ENCODE measurements at regions of chr5 and their contacts with region 1.

Region 1: DNA sequence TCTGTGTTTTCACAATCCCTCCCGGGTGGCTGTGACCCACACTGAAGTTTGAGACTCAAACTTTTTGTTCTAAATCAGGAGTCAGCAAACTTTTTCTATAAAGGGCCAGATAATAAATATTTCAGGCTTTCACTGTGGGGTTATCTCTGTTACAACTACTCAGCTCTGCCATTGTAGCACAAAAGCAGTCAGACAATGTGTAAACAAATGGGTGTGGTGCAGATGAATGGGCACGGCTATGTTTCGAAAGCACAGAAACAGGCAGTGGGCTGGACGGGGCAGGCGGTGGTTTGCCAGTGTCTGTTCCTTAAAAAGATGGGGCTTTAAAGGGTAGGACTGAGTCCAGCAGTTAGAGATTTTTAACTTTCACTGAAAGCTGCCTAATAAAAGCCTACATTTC is 49.0 kb downstream of the PFDN1 start:
- DNase-seq: no peak
- H3K4me3 ChIP-seq: no peak overlapping the region
- CTCF ChIP-seq: no peak
- POLR2A ChIP-seq: no peak

Region 2: GRCh38 chr5:140141241-140141640 is 112.7 kb before region 1 on chr5:
- intact Hi-C with region 1: no loop called
- DNase-seq: peak; percentile 74 to 88
- H3K4me3 ChIP-seq: no peak overlapping the region
- CTCF ChIP-seq: no peak
- POLR2A ChIP-seq: no peak

Region 3: DNA sequence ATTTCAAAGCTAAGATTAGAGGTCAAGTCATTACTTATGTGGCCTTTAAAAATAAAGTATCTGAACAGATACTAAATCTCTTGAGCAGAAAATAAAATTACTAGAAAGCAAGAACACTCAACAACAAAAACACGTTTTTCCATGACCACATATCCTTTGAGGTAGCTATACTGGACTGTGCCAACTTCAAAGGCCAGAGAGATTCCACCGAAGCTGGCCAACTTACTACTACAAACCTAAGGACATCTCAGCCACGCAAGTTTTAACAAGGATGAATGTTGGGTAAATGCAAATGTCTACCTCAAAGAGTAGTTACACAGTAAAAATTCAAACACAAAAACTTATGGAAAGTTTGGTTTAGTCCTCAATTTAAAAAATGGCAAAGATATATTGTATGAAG is 30.1 kb after region 1 on chr5:
- intact Hi-C with region 1: loop called (anchors 1 kb)
- DNase-seq: no peak
- H3K4me3 ChIP-seq: no peak overlapping the region
- CTCF ChIP-seq: no peak
- POLR2A ChIP-seq: no peak